ENCODE measurements at regions of chr2 and their contacts with region 1.

Region 1: DNA sequence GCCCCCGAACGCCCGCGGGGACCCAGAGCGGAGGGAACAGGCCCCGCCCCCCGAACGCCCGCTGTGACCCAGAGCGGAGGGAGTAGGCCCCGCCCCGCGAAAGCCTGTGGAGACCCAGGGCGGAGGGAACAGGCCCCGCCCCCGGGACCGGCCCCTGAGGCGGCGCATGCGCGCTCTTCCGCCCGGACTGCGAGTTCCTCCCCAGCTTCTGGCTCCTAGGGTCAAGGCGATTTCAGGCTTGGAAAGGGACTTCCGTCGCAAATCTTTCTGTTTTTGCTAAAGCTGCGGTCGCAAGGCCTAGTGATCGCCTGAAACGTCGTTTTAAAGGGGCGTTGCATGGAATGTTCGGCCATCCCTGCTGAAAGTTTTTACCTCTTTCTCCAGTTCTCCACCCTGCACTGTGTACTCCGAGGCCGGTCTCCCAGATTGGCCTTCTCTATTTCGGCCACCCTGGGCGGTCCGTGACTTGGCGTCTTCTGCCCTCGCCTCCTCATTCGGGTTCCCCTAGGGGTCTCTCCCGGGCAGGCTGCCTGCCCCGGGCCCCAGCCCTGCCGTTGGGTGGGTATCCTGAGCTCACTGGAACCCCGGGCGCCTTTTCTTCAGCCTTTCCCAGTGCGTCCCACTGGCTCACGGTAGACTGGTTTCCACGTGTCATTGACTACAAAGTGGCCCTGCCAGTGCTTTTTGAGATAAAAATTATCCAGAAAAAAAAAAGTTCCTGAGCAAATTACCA is 372 bp upstream of the WDSUB1 start:
- DNase-seq: peak; percentile 92 to 99
- ATAC-seq: peak; percentile 96 to 100 (median 97)
- H3K4me3 ChIP-seq: peak overlapping the region; percentile 64
- H3K4me3 Mint-ChIP-seq: peak overlapping the region; percentile 87
- H3K27ac ChIP-seq: peak overlapping the region; percentile 73
- H3K27ac Mint-ChIP-seq: peak overlapping the region; percentile 73 to 91
- H3K4me1 ChIP-seq: peaks cover 29% of the 10 kb centered on the region
- H3K4me1 Mint-ChIP-seq: peaks cover 32 to 38% of the 10 kb centered on the region in 2 donors
- H3K27me3 ChIP-seq: no peaks in the 10 kb centered on the region
- H3K27me3 Mint-ChIP-seq: no peaks in the 10 kb centered on the region
- CTCF ChIP-seq: no peak

Region 2: GRCh38 chr2:158559252-158559651 is 727.6 kb before region 1 on chr2:
- intact Hi-C with region 1: no loop called
- DNase-seq: no peak
- ATAC-seq: no peak
- H3K4me3 ChIP-seq: no peak overlapping the region
- H3K4me3 Mint-ChIP-seq: no peak overlapping the region
- H3K27ac ChIP-seq: no peak overlapping the region
- H3K27ac Mint-ChIP-seq: no peak overlapping the region
- H3K4me1 ChIP-seq: no peaks in the 10 kb centered on the region
- H3K4me1 Mint-ChIP-seq: no peaks in the 10 kb centered on the region
- H3K27me3 ChIP-seq: no peaks in the 10 kb centered on the region
- H3K27me3 Mint-ChIP-seq: no peaks in the 10 kb centered on the region
- CTCF ChIP-seq: no peak

Region 3: GRCh38 chr2:159131914-159132281 is 155.0 kb before region 1 on chr2:
- intact Hi-C with region 1: loop called (anchors 5 kb)
- DNase-seq: no peak
- ATAC-seq: peak in 2 of 3 donors; percentile 28 to 49
- H3K4me3 ChIP-seq: no peak overlapping the region
- H3K4me3 Mint-ChIP-seq: peak overlapping the region; percentile 73
- H3K27ac ChIP-seq: no peak overlapping the region
- H3K27ac Mint-ChIP-seq: peak overlapping the region in 1 of 2 donors; percentile 85
- H3K4me1 ChIP-seq: peaks cover 39% of the 10 kb centered on the region
- H3K4me1 Mint-ChIP-seq: peaks cover 58 to 59% of the 10 kb centered on the region in 2 donors
- H3K27me3 ChIP-seq: no peaks in the 10 kb centered on the region
- H3K27me3 Mint-ChIP-seq: peaks cover 0 to 1% of the 10 kb centered on the region in 2 donors
- CTCF ChIP-seq: no peak

Measured in natural killer cell (primary cell).